Gastrocnemius medialis (tissue), 4 donors: ENCODE measurements at regions of chr4 and their contacts with region 1.

Region 1: DNA sequence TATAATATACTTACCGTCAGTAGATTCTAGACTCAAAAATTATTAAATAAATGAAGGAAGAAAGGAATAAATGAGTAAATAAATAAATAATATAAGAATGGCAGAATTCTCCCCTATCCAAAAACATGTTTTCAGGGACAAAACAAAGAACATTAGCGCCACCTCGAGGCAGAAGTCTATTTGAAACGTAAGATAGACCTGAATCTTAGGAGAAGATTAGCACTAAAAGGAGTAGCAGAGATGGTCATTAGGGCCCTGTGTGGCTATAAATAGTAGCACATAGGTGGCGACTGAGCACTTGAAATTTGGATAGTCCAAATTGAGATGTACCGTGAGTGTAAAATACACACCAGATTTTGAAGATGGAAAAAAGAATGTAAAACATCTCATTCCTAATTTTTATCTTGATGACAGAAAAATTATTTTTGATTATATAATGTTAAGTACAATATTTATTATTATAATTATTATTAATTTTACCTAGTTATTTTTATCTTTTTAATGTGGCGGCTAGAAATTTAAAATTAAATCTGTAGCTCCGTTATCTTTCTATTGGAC is 24.3 kb upstream of the SRD5A3 start:
- DNase-seq: peak; percentile 7 to 37
- ATAC-seq: no peak
- H3K4me3 ChIP-seq: no peak overlapping the region
- H3K27ac ChIP-seq: no peak overlapping the region
- H3K4me1 ChIP-seq: no peaks in the 10 kb centered on the region
- H3K27me3 ChIP-seq: no peaks in the 10 kb centered on the region
- CTCF ChIP-seq: peak; percentile 14 to 53 (median 23)
- POLR2A ChIP-seq: no peak

Region 2: DNA sequence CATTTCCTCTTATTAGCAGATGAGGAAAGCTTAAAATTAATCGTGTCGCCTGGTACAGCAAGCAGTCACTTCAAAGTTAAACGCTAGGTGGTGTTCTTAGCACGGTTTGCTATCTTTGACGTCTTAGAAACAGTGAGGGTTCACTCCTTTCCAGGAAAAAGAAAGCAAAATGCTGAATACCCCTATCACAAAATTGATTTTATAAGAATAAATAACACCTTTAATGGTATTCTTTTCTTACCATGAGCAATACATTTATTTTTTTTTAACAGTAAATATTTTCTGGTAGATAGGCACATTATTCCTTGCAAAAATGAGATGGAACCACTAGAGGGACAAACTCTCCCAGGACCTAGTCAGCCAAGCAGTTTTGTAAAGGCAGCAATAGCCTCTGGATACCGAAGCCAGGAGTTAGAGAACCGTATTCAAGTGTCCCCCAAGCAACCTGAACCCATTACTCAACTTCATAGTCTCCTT is 350.3 kb before region 1 on chr4:
- in situ Hi-C with region 1: loop called in 1 of 4 experiments (anchors 10 kb)
- intact Hi-C with region 1: loop called (anchors 5 kb)
- DNase-seq: no peak
- ATAC-seq: peak; percentile 41 to 52
- H3K4me3 ChIP-seq: no peak overlapping the region
- H3K27ac ChIP-seq: no peak overlapping the region
- H3K4me1 ChIP-seq: no peaks in the 10 kb centered on the region
- H3K27me3 ChIP-seq: no peaks in the 10 kb centered on the region
- CTCF ChIP-seq: peak in 3 of 5 experiments; percentile 11 to 53 (median 52)
- POLR2A ChIP-seq: no peak

Region 3: GRCh38 chr4:55008166-55009070 is 313.4 kb before region 1 on chr4:
- in situ Hi-C with region 1: loop called (anchors 10 to 25 kb)
- intact Hi-C with region 1: no loop called
- DNase-seq: no peak
- ATAC-seq: no peak
- H3K4me3 ChIP-seq: no peak overlapping the region
- H3K27ac ChIP-seq: no peak overlapping the region
- H3K4me1 ChIP-seq: peaks cover 0 to 13% of the 10 kb centered on the region in 2 donors
- H3K27me3 ChIP-seq: no peaks in the 10 kb centered on the region
- CTCF ChIP-seq: peak in 1 of 5 experiments; percentile 20
- POLR2A ChIP-seq: no peak

Region 4: GRCh38 chr4:55218041-55218440 is 103.7 kb before region 1 on chr4:
- in situ Hi-C with region 1: no loop called
- intact Hi-C with region 1: no loop called
- DNase-seq: no peak
- ATAC-seq: no peak
- H3K4me3 ChIP-seq: no peak overlapping the region
- H3K27ac ChIP-seq: no peak overlapping the region
- H3K4me1 ChIP-seq: no peaks in the 10 kb centered on the region
- H3K27me3 ChIP-seq: no peaks in the 10 kb centered on the region
- CTCF ChIP-seq: no peak
- POLR2A ChIP-seq: no peak